Left cardiac atrium (tissue), 4 donors: ENCODE measurements at regions of chr11 and their contacts with region 1.

Region 1: DNA sequence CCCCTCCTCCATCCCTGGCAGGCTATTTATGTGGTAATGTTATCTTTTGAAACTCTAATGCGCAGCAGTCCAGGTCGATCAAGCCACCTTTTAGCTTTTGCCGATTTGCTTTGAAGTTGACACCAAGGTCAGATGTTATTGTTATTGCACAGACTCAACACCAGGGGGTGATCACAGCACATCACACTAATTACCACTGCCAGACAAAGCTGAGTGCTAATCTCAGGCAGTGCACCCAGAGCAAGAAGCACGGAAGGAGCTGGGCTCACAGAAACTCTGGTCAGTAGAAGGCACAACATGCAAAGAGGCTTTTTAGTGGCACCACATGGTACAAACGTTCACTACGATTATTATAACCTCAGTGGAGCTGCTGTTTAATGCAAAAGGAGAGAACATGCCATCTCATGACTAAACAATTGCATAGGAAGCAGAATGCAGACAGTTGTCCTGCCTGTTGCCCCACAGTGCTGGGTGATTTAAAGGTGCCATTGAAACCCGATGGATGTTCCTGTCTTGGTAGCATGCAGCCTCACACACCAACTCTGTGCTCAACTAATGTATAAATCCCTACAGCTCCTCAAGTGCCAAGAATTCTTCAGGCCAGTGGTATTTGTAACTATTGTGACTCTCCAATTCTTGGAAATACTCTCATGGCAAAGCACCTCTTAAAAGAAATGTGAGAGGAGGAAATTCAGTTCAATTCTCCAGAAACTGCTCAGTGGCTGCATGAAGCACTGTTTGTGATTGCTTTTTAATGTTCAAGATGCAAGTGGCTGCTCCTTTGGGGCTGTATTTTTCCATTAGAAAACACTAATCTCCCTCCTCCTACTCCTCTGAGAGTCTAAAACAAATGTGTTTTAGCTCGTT is 353.9 kb upstream of the DDI1 start:
- DNase-seq: peak; percentile 33
- ATAC-seq: peak; percentile 96

Region 2: DNA sequence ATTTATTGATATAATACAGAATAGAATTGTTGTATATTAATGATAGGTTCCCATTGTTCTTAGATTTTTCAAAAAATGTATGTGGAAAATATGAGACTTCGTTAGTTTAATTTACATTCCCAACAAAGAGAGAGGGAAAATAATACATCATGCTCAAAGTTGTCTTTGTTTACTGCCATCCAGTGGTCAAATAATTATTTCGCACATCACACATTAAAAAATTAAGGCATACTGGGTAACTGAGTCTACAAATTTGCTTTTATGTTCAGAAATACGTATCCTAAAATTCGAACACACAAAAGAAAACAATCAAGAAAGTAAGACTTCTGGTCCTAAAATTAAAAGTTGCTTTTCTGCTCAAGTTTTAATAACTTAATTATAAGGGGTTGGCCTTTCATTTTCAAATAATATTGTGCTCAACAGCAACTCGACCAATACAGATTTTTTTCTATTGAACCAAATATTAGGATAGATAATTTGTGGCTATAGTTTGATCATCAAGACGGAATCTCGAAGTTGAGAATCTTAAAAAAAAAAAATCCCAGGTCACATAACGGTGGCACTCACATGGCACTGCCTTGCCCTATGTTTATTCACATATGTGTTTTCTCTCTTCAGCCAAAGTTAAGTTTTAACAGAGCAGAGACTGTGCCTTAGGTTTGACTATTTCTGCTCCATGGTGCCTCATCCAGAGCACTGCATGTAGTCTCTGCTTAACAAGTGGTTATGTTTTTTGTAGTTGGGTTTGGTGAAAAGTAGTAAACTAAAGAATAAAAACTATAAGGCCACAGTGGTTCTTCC is 469.1 kb after region 1 on chr11:
- intact Hi-C with region 1: loop called (anchors 2 to 5 kb)
- DNase-seq: no peak
- ATAC-seq: no peak

Region 3: GRCh38 chr11:104713401-104713800 is 1030.8 kb after region 1 on chr11:
- intact Hi-C with region 1: no loop called
- DNase-seq: no peak
- ATAC-seq: no peak